HepG2 (cell line): ENCODE measurements at regions of chr1 and their contacts with region 1.

Region 1: DNA sequence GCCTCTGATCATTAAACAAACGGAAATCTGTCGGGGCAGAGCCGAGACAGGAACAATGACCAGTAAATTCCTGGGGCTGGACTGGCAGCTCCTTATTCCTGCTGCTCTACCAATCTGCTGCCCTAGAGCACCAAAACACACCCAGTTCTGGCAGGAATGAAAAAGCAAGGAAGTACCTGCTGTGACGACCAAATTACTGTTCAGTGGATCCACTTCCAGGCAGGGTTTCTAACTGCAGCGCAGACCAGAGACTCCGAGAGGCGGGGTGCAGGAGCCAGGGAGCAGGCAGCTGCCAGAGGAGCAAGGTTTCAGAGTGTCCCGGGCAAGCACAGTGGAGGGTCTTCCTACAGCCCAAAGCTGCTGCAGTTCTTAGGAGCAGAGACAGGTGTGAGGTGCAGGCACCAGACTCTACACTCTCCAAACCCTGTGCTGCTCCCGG is 32.4 kb downstream of the KANK4 start:
- DNase-seq: peak; percentile 63
- ATAC-seq: peak; percentile 70
- H3K4me3 ChIP-seq: peak overlapping the region in 2 of 3 experiments; percentile 5 to 47; a peak in 2 of 6 replicates
- H3K27ac ChIP-seq: peak overlapping the region; percentile 57
- H3K4me1 ChIP-seq: peaks cover 70% of the 10 kb centered on the region
- H3K27me3 ChIP-seq: no peaks in the 10 kb centered on the region
- CTCF ChIP-seq: no peak
- EP300 ChIP-seq: no peak
- POLR2A ChIP-seq: no peak
- RAD21 ChIP-seq: no peak

Region 2: GRCh38 chr1:62241377-62242131 is 45.3 kb before region 1 on chr1:
- CTCF ChIA-PET with region 1: no interaction called
- POLR2A ChIA-PET with region 1: no interaction called
- in situ Hi-C with region 1: no loop called
- intact Hi-C with region 1: loop called (anchors 5 kb)
- DNase-seq: peak; percentile 91
- ATAC-seq: peak; percentile 91
- H3K4me3 ChIP-seq: peak overlapping the region in 1 of 3 experiments; percentile 22; a peak in 2 of 6 replicates
- H3K27ac ChIP-seq: peak overlapping the region; percentile 66
- H3K4me1 ChIP-seq: peaks cover 75% of the 10 kb centered on the region
- H3K27me3 ChIP-seq: no peaks in the 10 kb centered on the region
- CTCF ChIP-seq: peak; percentile 37
- EP300 ChIP-seq: peak in 1 of 2 experiments; percentile 71; a peak in 2 of 4 replicates
- POLR2A ChIP-seq: no peak
- RAD21 ChIP-seq: peak; percentile 29; the same call in 1 of the 2 replicates

Region 3: GRCh38 chr1:62318756-62319544 is 32.1 kb after region 1 on chr1 and contains the start of gene KANK4:
- CTCF ChIA-PET with region 1: no interaction called
- POLR2A ChIA-PET with region 1: interaction called, 12 read pairs
- in situ Hi-C with region 1: no loop called
- intact Hi-C with region 1: no loop called
- DNase-seq: peak; percentile 77
- ATAC-seq: peak; percentile 77
- H3K4me3 ChIP-seq: peak within 1 kb of the TSS; percentile 90 to 96 (median 93)
- H3K27ac ChIP-seq: peak within 1 kb of the TSS; percentile 62
- H3K4me1 ChIP-seq: peaks cover 75% of the 10 kb centered on the region
- H3K27me3 ChIP-seq: no peaks in the 10 kb centered on the region
- CTCF ChIP-seq: no peak; the same call in 1 of the 2 replicates
- EP300 ChIP-seq: peak in 1 of 2 experiments; percentile 50; a peak in 1 of 4 replicates
- POLR2A ChIP-seq: peak in 1 of 2 experiments; percentile 57; a peak in 1 of 4 replicates
- RAD21 ChIP-seq: peak; percentile 63
- total RNA-seq, gene KANK4: 25.7 and 28.8 TPM in 2 replicates

Region 4: DNA sequence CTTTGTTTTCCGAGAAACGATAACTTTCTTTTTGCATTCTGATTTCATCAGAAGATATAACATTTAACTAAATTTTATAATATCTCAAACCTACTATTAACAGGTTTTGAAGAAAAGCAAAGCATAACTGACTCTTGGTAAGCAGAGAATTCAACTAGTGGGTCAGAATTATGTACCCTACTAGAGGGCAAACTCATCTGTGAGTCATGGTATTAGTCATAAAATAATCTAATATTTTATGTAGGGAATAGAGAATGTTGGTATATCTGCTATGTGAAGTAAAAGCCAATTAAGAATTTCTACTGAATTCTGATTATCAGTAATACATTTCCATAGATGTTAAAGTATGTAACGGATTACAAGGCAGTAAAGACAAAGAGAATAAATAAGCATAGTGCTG is 206.9 kb after region 1 on chr1:
- CTCF ChIA-PET with region 1: no interaction called
- POLR2A ChIA-PET with region 1: no interaction called
- in situ Hi-C with region 1: no loop called
- intact Hi-C with region 1: no loop called
- DNase-seq: no peak
- ATAC-seq: no peak
- H3K4me3 ChIP-seq: no peak overlapping the region
- H3K27ac ChIP-seq: no peak overlapping the region
- H3K4me1 ChIP-seq: no peaks in the 10 kb centered on the region
- H3K27me3 ChIP-seq: no peaks in the 10 kb centered on the region
- CTCF ChIP-seq: no peak
- EP300 ChIP-seq: no peak
- POLR2A ChIP-seq: no peak
- RAD21 ChIP-seq: no peak